ENCODE measurements at regions of chr2 and their contacts with region 1.

Region 1: DNA sequence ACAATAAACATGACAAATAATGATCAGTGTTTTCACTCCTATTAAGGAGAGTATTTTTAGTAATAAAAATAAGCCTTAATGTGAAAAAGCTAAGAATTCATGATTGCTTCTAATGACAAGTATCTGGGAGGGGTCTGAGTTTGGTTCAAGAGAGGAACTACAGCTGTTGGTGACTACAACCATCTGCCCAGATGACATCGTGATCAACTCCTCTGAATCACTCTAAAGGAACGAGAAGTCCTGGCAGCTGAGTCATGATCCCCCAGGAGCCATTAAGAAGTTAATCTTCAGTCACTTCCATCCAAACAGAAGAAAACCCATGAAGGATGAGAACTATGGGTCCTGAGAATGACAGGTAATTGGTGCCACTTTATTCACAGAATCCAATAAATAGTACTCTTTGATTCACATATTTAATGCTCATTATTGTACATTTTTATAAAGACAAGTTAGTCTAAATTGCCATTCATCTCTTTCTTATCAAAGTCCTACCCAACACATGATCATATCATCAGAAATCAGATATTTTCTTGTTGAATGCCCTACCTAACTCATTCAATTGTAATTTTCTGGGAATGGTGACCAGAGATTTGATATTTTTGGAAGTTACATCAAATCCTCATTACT is 6.8 kb downstream of the TFPI start:
- DNase-seq: peak in 1 of 2 donors; percentile 68
- ATAC-seq: peak; percentile 53 to 99 (median 94)
- H3K4me3 ChIP-seq: peak overlapping the region in 1 of 10 donors; percentile 23
- H3K27ac ChIP-seq: peak overlapping the region; percentile 9 to 86 (median 62)
- H3K4me1 ChIP-seq: peaks cover 0 to 75% (median 19%) of the 10 kb centered on the region in 9 donors
- H3K27me3 ChIP-seq: no peaks in the 10 kb centered on the region
- CTCF ChIP-seq: no peak

Region 2: GRCh38 chr2:187527262-187527661 is 20.2 kb before region 1 on chr2:
- intact Hi-C with region 1: loop called in 1 of 10 experiments (anchors 2 kb)
- DNase-seq: no peak
- ATAC-seq: peak in 4 of 8 donors; percentile 34 to 64 (median 50)
- H3K4me3 ChIP-seq: no peak overlapping the region
- H3K27ac ChIP-seq: peak overlapping the region in 4 of 10 donors; percentile 5 to 53 (median 47)
- H3K4me1 ChIP-seq: peaks cover 0 to 38% (median 9%) of the 10 kb centered on the region in 9 donors
- H3K27me3 ChIP-seq: no peaks in the 10 kb centered on the region
- CTCF ChIP-seq: no peak

Region 3: GRCh38 chr2:187689383-187689782 is 141.9 kb after region 1 on chr2:
- intact Hi-C with region 1: no loop called
- DNase-seq: no peak
- ATAC-seq: no peak
- H3K4me3 ChIP-seq: no peak overlapping the region
- H3K27ac ChIP-seq: no peak overlapping the region
- H3K4me1 ChIP-seq: no peaks in the 10 kb centered on the region
- H3K27me3 ChIP-seq: no peaks in the 10 kb centered on the region
- CTCF ChIP-seq: no peak